Gastrocnemius medialis (tissue), 4 donors: ENCODE measurements at regions of chr4 and their contacts with region 1.

Region 1: DNA sequence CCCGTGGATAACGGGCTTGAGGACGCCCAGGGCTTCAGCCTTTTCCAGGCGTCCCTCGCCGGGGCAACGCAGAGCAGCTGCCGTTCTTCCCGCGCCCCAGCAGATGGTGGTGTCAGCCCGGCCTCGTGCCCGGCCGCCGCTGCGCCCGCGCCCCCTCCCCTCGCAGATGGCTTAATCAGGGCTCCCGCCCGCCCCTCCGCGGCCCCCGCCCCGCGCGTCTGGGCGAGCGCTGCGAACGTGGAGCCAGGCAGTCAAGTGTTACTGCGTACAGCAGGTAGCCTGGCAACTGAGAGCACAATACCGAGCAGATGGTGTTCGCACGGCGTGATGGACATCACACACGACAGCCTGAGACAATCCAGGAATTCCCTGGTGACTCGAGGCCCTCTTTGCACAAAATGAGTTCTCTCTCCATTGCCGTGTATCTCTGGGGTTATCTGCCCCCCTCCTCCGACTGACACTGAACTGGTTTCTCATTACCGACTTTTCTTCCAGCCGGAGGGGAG is 69.3 kb downstream of the MGST2 start:
- DNase-seq: peak; percentile 69 to 79
- ATAC-seq: peak; percentile 84 to 86
- H3K4me3 ChIP-seq: peak overlapping the region; percentile 56 to 70 (median 64)
- H3K27ac ChIP-seq: peak overlapping the region; percentile 70 to 85 (median 74)
- H3K4me1 ChIP-seq: peaks cover 23 to 27% of the 10 kb centered on the region in 2 donors
- H3K27me3 ChIP-seq: no peaks in the 10 kb centered on the region
- CTCF ChIP-seq: peak; percentile 71 to 94 (median 86)
- POLR2A ChIP-seq: no peak

Region 2: GRCh38 chr4:139554893-139555704 is 179.8 kb before region 1 on chr4:
- in situ Hi-C with region 1: no loop called
- intact Hi-C with region 1: no loop called
- DNase-seq: peak; percentile 90 to 92
- ATAC-seq: peak; percentile 67 to 71
- H3K4me3 ChIP-seq: peak overlapping the region; percentile 65 to 98 (median 87)
- H3K27ac ChIP-seq: peak overlapping the region; percentile 96 to 99 (median 98)
- H3K4me1 ChIP-seq: peaks cover 45 to 51% of the 10 kb centered on the region in 2 donors
- H3K27me3 ChIP-seq: no peaks in the 10 kb centered on the region
- CTCF ChIP-seq: peak in 1 of 5 experiments; percentile 7
- POLR2A ChIP-seq: peak; percentile 56 to 78

Region 3: GRCh38 chr4:139768896-139769295 is 34.0 kb after region 1 on chr4:
- in situ Hi-C with region 1: no loop called
- intact Hi-C with region 1: loop called (anchors 5 kb)
- DNase-seq: no peak
- ATAC-seq: no peak
- H3K4me3 ChIP-seq: no peak overlapping the region
- H3K27ac ChIP-seq: no peak overlapping the region
- H3K4me1 ChIP-seq: peaks cover 34 to 38% of the 10 kb centered on the region in 2 donors
- H3K27me3 ChIP-seq: no peaks in the 10 kb centered on the region
- CTCF ChIP-seq: no peak
- POLR2A ChIP-seq: no peak

Region 4: GRCh38 chr4:139861471-139861870 is 126.5 kb after region 1 on chr4:
- in situ Hi-C with region 1: no loop called
- intact Hi-C with region 1: loop called (anchors 1 kb)
- DNase-seq: no peak
- ATAC-seq: peak in 1 of 2 donors; percentile 62
- H3K4me3 ChIP-seq: no peak overlapping the region
- H3K27ac ChIP-seq: no peak overlapping the region
- H3K4me1 ChIP-seq: peaks cover 0 to 4% of the 10 kb centered on the region in 2 donors
- H3K27me3 ChIP-seq: no peaks in the 10 kb centered on the region
- CTCF ChIP-seq: peak in 1 of 5 experiments; percentile 17
- POLR2A ChIP-seq: no peak

Region 5: GRCh38 chr4:140004549-140004895 is 269.6 kb after region 1 on chr4:
- in situ Hi-C with region 1: no loop called
- intact Hi-C with region 1: loop called (anchors 5 kb)
- DNase-seq: peak; percentile 46 to 66
- ATAC-seq: peak; percentile 81 to 90
- H3K4me3 ChIP-seq: peak overlapping the region; percentile 41 to 52 (median 51)
- H3K27ac ChIP-seq: peak overlapping the region in 3 of 4 donors; percentile 15 to 77 (median 60)
- H3K4me1 ChIP-seq: peaks cover 18 to 23% of the 10 kb centered on the region in 2 donors
- H3K27me3 ChIP-seq: no peaks in the 10 kb centered on the region
- CTCF ChIP-seq: no peak
- POLR2A ChIP-seq: no peak

Region 6: GRCh38 chr4:140237606-140237986 is 502.7 kb after region 1 on chr4:
- in situ Hi-C with region 1: no loop called
- intact Hi-C with region 1: loop called (anchors 5 kb)
- DNase-seq: peak; percentile 53 to 70
- ATAC-seq: peak; percentile 42 to 49
- H3K4me3 ChIP-seq: peak overlapping the region; percentile 25 to 45 (median 39)
- H3K27ac ChIP-seq: peak overlapping the region; percentile 84 to 90 (median 88)
- H3K4me1 ChIP-seq: peaks cover 38 to 48% of the 10 kb centered on the region in 2 donors
- H3K27me3 ChIP-seq: no peaks in the 10 kb centered on the region
- CTCF ChIP-seq: no peak
- POLR2A ChIP-seq: no peak

Region 7: GRCh38 chr4:140308366-140309123 is 573.6 kb after region 1 on chr4:
- in situ Hi-C with region 1: no loop called
- intact Hi-C with region 1: loop called (anchors 2 kb)
- DNase-seq: peak; percentile 80 to 89
- ATAC-seq: peak; percentile 97 to 98
- H3K4me3 ChIP-seq: peak overlapping the region in 3 of 4 donors; percentile 15 to 38 (median 29)
- H3K27ac ChIP-seq: peak overlapping the region; percentile 82 to 88 (median 87)
- H3K4me1 ChIP-seq: peaks cover 22 to 25% of the 10 kb centered on the region in 2 donors
- H3K27me3 ChIP-seq: no peaks in the 10 kb centered on the region
- CTCF ChIP-seq: no peak
- POLR2A ChIP-seq: no peak

Region 8: GRCh38 chr4:140373328-140374129 is 638.6 kb after region 1 on chr4 and contains the start of gene SCOC:
- in situ Hi-C with region 1: loop called in 1 of 4 experiments (anchors 25 kb)
- intact Hi-C with region 1: loop called (anchors 5 kb)
- DNase-seq: peak; percentile 99 to 100
- ATAC-seq: peak; percentile 99 to 100
- H3K4me3 ChIP-seq: peak within 1 kb of the TSS; percentile 70 to 97 (median 80)
- H3K27ac ChIP-seq: peak within 1 kb of the TSS; percentile 86 to 96 (median 92)
- H3K4me1 ChIP-seq: peaks cover 28 to 39% of the 10 kb centered on the region in 2 donors
- H3K27me3 ChIP-seq: no peaks in the 10 kb centered on the region
- CTCF ChIP-seq: no peak
- POLR2A ChIP-seq: peak; percentile 77 to 78
- total RNA-seq, gene SCOC: 21.5 to 36.6 (median 30.6) TPM